ENCODE measurements at regions of chr18 and their contacts with region 1.

Region 1: DNA sequence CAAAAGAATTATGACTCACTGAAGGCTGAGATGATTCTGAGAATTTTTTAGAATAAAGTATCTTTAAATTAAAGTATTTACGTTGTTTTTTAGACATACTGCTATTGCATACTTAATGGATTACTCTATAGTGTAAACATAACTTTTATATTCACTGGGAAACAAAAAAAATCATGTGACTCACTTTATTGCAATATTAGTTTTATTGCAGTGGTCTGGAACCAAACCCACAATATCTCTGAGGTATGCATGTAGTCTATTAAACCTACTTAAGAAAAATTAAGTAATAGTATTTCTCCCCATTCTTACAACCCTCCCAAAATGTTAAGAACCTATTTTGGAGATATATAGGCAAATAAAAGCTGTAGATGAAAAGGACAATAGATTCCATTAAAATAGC is 142.9 kb upstream of the ZNF521 start:
- DNase-seq: no peak
- ATAC-seq: no peak
- H3K4me3 ChIP-seq: no peak overlapping the region
- H3K27ac ChIP-seq: no peak overlapping the region
- H3K4me1 ChIP-seq: no peaks in the 10 kb centered on the region
- H3K27me3 ChIP-seq: no peaks in the 10 kb centered on the region
- CTCF ChIP-seq: no peak
- POLR2A ChIP-seq: no peak

Region 2: GRCh38 chr18:25425024-25425423 is 69.9 kb before region 1 on chr18:
- intact Hi-C with region 1: loop called in 1 of 10 experiments (anchors 2 kb)
- DNase-seq: no peak
- ATAC-seq: peak in 2 of 4 donors; percentile 52 to 87
- H3K4me3 ChIP-seq: no peak overlapping the region
- H3K27ac ChIP-seq: no peak overlapping the region
- H3K4me1 ChIP-seq: peaks cover 0 to 7% (median 0%) of the 10 kb centered on the region in 12 donors
- H3K27me3 ChIP-seq: no peaks in the 10 kb centered on the region
- CTCF ChIP-seq: no peak
- POLR2A ChIP-seq: no peak